HEK293 (cell line): ENCODE measurements at regions of chr2 and their contacts with region 1.

Region 1: DNA sequence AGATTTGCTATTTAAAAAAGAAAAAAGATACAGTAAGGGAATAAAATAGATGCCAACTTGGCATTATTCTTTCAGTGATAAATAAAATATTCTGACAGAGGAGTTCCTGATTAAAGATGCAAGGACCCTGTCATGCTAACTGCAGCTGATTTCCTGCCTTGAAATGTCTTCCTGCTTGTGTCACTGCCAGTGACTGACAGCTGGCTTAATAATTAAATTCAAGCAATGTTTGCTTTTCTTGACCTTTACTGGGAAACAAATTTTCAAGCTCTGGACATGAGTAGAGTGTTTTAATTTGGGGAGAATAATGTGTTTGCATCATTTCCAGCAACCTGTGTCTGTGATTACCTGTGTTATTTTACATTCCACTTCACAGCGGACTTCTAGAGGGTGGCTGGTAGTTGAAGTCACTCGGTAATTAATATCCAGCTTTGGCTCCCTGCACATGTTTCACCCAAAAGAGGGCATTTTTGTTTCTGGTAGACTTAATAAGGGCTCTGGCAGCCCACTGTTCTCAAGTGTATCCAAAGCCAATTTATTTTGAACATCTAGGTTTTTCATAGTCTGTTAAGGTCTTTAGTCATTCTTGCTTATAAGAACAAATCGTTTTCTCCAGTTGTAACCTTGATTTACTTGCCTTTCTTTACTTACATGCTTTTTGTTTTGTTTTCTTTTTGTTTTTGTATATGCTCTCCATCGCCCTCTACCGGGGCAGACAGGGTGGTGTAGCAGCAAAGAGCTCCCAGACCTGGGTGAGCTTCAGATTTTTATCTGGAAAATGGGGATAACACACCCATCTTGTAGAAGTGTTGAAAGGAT is 48.5 kb upstream of the PROKR1 start:
- H3K4me3 ChIP-seq: no peak overlapping the region
- H3K27ac ChIP-seq: no peak overlapping the region
- H3K4me1 ChIP-seq: no peaks in the 10 kb centered on the region
- CTCF ChIP-seq: peak; percentile 41; the same call in 1 of the 2 replicates

Region 2: DNA sequence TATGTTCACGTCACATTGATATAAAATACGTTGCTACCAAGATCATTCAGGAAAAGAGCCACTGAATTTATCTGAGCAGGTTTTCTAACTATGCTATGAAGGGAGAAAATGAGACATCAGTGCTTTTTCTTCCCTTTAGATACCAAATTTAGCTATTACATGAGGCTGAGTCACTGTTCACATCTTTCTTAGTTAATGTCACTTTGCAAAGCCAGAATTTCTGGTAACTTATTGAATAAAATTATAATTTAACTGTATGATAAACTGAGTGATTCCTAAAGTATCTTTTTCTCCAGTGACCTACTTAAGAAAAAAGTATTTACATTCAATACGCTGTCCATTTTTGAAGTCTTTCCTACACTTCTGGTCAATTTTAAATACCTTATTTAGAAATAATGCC is 554.8 kb before region 1 on chr2:
- CTCF ChIA-PET with region 1: no interaction called
- POLR2A ChIA-PET with region 1: no interaction called
- H3K4me3 ChIP-seq: no peak overlapping the region
- H3K27ac ChIP-seq: no peak overlapping the region
- H3K4me1 ChIP-seq: peaks cover 24% of the 10 kb centered on the region
- CTCF ChIP-seq: no peak

Region 3: GRCh38 chr2:68345129-68345875 is 249.6 kb before region 1 on chr2:
- CTCF ChIA-PET with region 1: no interaction called
- POLR2A ChIA-PET with region 1: no interaction called
- H3K4me3 ChIP-seq: no peak overlapping the region
- H3K27ac ChIP-seq: no peak overlapping the region
- H3K4me1 ChIP-seq: no peaks in the 10 kb centered on the region
- CTCF ChIP-seq: no peak

Region 4: DNA sequence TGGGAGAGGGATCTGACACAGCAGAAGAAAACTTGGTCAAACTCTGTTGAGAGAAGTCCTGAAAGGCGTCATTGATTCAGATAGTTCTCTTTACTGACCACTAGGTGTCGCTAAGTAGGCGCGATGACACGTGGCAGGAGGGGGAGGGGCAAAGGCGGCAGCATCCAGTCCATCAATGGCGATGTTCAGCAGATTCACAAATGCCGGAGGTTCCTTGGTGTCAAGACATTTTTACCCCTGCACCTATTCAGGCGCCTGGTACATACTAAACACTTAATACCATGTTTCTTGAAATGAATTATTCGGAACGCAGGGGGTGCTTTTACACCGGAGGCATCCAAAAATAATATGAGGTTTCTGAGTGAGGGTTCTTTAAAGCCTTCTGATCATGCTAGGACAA is 232.8 kb before region 1 on chr2:
- CTCF ChIA-PET with region 1: no interaction called
- POLR2A ChIA-PET with region 1: no interaction called
- H3K4me3 ChIP-seq: no peak overlapping the region
- H3K27ac ChIP-seq: no peak overlapping the region
- H3K4me1 ChIP-seq: no peaks in the 10 kb centered on the region
- CTCF ChIP-seq: peak; percentile 39; the same call in 1 of the 2 replicates

Region 5: DNA sequence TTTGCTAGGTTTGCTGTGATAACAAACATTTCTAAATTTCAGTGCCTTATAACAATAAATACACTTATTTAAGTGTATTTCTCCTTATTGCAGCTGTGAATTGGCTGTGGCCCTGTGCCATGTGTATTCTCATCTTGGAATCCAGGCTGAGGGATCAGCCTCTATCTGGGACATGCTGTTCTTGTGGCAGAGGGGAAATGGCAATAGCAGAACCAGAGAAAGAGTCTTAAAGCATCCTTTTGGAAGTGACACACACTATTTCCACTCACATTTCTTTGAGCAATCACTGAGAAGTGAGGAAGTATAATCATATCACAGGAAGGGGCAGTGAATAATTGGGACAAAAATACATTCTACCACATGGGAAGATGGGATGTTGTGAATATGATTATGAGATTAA is 17.7 kb before region 1 on chr2:
- CTCF ChIA-PET with region 1: interaction called, 19 read pairs
- POLR2A ChIA-PET with region 1: no interaction called
- H3K4me3 ChIP-seq: no peak overlapping the region
- H3K27ac ChIP-seq: no peak overlapping the region
- H3K4me1 ChIP-seq: no peaks in the 10 kb centered on the region
- CTCF ChIP-seq: no peak

Region 6: DNA sequence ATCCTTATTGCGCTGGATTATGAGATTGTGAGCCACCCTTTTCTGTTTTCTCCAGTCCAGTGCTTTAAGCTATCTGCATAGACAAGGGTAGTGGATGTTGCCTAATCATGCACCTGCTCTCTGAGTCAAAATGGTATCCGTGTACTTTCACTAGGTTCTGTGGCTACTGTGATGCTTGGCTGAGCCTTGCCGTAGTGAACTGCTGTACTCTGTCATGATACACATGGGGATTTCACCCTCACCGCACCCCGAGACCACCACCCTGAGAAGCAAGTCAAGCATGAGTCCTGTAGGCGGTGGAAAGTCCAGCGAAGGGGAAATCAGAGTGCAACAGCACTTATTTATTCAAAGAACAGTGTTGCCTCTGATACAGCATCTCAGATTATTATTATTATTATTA is 194.7 kb after region 1 on chr2:
- CTCF ChIA-PET with region 1: no interaction called
- POLR2A ChIA-PET with region 1: no interaction called
- H3K4me3 ChIP-seq: no peak overlapping the region
- H3K27ac ChIP-seq: no peak overlapping the region
- H3K4me1 ChIP-seq: no peaks in the 10 kb centered on the region
- CTCF ChIP-seq: no peak